ENCODE measurements at regions of chr1 and their contacts with region 1.

Region 1: DNA sequence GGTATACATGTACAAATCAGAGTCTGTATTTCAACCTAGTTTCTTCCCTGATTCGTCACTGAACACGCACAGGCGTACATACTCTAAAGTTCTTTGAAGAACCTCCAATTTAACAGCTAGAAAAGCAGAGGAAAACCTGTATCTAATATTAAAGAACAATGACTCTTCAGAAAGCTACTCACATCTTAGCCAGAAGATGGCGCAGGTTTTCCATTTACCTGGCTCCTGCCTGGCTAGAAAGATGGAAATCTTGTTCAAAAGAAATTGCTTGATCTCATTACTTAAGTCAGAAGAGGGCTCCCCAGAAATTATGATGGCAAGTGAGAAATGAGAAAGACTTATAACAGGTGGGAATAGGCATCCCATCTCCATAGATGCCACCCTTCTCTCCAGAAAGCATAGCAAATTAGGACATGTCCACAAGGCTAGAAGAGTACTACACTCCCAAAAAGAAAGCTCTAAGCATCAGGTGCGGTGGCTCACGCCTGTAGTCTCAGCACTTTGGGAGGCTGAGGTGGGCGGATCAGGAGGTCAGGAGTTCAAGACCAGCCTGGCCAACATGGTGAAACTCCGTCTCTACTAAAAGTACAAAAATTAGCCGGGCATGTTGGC is 19.0 kb upstream of the L1TD1 start:
- DNase-seq: peak; percentile 72
- H3K4me3 Mint-ChIP-seq: no peak overlapping the region
- H3K27ac Mint-ChIP-seq: no peak overlapping the region
- H3K4me1 Mint-ChIP-seq: no peaks in the 10 kb centered on the region
- H3K27me3 Mint-ChIP-seq: no peaks in the 10 kb centered on the region
- CTCF ChIP-seq: peak; percentile 70

Region 2: GRCh38 chr1:62103880-62104279 is 71.8 kb before region 1 on chr1:
- CTCF ChIA-PET with region 1: no interaction called
- POLR2A ChIA-PET with region 1: no interaction called
- intact Hi-C with region 1: no loop called
- DNase-seq: no peak
- H3K4me3 Mint-ChIP-seq: no peak overlapping the region
- H3K27ac Mint-ChIP-seq: no peak overlapping the region
- H3K4me1 Mint-ChIP-seq: no peaks in the 10 kb centered on the region
- H3K27me3 Mint-ChIP-seq: no peaks in the 10 kb centered on the region
- CTCF ChIP-seq: no peak

Region 3: DNA sequence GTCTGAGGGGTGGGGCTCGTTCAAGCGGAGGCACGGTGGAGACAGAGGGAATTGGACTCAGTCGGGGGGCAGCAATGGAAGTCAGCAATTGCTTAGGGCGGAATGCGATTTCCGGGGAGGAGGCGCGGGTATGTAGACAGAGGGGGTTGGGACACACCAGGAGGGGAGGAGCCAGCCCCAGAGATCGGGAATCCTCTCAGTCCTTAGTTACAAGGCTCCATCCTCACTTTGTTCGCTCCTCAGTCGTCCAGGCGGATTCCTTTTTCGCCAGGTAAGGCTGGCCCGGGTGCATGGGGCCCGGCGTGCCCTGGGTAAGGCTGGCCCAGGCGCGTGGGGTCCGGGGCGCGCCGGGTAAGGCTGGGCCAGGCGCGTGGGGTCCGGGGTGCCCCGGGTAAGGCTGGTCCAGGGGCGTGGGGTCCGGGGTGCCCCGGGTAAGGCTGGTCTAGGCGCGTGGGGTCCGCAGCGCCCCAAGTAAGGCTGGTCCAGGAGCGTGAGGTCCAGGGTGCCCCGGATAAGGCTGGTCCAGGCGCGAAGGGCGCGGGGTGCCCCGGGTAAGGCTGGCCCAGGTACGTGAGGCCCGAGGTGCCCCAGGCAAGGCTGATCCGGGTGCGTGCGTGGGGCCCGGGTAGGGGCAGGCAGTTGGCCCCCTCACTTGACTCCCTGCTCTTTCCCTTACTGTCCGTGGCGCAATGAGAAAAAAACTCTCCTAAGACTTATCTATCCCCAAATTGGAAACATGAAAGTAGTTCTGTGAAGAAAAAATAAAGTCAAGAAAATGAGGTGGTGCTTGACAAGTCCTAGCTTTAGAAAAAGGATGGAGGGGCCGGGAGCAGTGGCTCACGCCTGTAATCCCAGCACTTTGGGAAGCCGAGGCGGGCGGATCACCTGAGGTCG is 19.2 kb after region 1 on chr1 and contains the start of gene L1TD1:
- CTCF ChIA-PET with region 1: interaction called, 11 read pairs
- POLR2A ChIA-PET with region 1: no interaction called
- intact Hi-C with region 1: no loop called
- DNase-seq: no peak
- H3K4me3 Mint-ChIP-seq: no peak within 1 kb of the TSS
- H3K27ac Mint-ChIP-seq: no peak within 1 kb of the TSS
- H3K4me1 Mint-ChIP-seq: peaks cover 7% of the 10 kb centered on the region
- H3K27me3 Mint-ChIP-seq: no peaks in the 10 kb centered on the region
- CTCF ChIP-seq: no peak
- total RNA-seq, gene L1TD1: not detected in 2 replicates

Region 4: DNA sequence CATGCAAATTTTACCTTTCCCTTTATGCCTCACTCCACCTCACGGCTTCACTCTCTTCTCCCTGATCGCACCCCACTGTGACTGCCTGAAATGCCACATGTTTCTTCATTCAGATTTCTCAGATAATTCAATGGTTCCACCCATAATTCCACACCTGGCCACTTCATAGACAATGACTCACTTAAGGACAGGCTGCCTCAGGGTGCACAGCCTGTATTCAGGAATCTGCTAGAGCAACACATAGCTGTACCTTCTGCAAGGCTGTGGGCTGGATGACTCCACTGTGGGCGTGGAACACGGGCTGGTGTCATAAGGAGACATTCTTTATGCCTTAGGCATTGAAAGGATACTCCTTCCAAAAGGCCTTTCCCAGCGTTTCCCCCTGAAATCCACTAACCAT is 55.0 kb after region 1 on chr1:
- CTCF ChIA-PET with region 1: interaction called, 21 read pairs
- POLR2A ChIA-PET with region 1: no interaction called
- intact Hi-C with region 1: no loop called
- DNase-seq: peak; percentile 97
- H3K4me3 Mint-ChIP-seq: peak overlapping the region; percentile 6
- H3K27ac Mint-ChIP-seq: peak overlapping the region; percentile 43
- H3K4me1 Mint-ChIP-seq: peaks cover 40% of the 10 kb centered on the region
- H3K27me3 Mint-ChIP-seq: no peaks in the 10 kb centered on the region
- CTCF ChIP-seq: no peak

Region 5: DNA sequence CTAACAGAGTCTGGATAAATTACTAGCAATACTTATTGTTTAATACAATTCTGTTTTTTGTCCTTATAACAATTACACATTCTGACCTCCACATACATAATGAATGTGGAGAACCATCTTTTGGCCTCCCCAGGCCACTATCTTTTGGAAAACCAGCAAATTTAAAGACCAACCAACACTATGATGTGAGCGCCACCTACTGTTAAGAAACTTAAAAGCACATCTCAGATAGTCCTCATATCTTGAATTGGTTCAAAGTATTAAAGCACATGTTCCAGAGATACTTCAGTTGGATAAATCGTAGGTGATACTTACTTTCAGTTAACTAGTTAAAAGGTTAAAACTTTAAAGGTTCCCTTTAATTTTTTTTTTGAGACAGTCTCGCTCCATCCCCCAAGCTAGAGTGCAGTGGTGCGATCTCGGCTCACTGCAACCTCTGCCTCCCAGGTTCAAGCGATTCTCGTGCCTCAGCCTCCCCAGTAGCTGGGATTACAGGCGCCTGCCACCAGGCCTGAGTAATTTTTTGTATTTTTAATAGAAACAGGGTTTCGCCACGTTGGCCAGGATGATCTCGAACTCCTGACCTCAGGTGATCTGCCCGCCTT is 231.8 kb after region 1 on chr1:
- CTCF ChIA-PET with region 1: interaction called, 241 read pairs
- POLR2A ChIA-PET with region 1: interaction called, 5 read pairs
- intact Hi-C with region 1: loop called (anchors 1 kb)
- DNase-seq: peak; percentile 75
- H3K4me3 Mint-ChIP-seq: no peak overlapping the region
- H3K27ac Mint-ChIP-seq: no peak overlapping the region
- H3K4me1 Mint-ChIP-seq: peaks cover 6% of the 10 kb centered on the region
- H3K27me3 Mint-ChIP-seq: no peaks in the 10 kb centered on the region
- CTCF ChIP-seq: peak; percentile 62

Region 6: GRCh38 chr1:62436466-62437256 is 261.0 kb after region 1 on chr1 and contains the start of gene USP1:
- CTCF ChIA-PET with region 1: interaction called, 18 read pairs
- POLR2A ChIA-PET with region 1: no interaction called
- intact Hi-C with region 1: no loop called
- DNase-seq: peak; percentile 100
- H3K4me3 Mint-ChIP-seq: peak within 1 kb of the TSS; percentile 69
- H3K27ac Mint-ChIP-seq: peak within 1 kb of the TSS; percentile 100
- H3K4me1 Mint-ChIP-seq: peaks cover 24% of the 10 kb centered on the region
- H3K27me3 Mint-ChIP-seq: no peaks in the 10 kb centered on the region
- CTCF ChIP-seq: no peak
- total RNA-seq, gene USP1: 32.8 and 47.2 TPM in 2 replicates

Measured in MCF 10A (cell line).